Caco-2 (cell line): ENCODE measurements at regions of chr14 and their contacts with region 1.

Region 1: DNA sequence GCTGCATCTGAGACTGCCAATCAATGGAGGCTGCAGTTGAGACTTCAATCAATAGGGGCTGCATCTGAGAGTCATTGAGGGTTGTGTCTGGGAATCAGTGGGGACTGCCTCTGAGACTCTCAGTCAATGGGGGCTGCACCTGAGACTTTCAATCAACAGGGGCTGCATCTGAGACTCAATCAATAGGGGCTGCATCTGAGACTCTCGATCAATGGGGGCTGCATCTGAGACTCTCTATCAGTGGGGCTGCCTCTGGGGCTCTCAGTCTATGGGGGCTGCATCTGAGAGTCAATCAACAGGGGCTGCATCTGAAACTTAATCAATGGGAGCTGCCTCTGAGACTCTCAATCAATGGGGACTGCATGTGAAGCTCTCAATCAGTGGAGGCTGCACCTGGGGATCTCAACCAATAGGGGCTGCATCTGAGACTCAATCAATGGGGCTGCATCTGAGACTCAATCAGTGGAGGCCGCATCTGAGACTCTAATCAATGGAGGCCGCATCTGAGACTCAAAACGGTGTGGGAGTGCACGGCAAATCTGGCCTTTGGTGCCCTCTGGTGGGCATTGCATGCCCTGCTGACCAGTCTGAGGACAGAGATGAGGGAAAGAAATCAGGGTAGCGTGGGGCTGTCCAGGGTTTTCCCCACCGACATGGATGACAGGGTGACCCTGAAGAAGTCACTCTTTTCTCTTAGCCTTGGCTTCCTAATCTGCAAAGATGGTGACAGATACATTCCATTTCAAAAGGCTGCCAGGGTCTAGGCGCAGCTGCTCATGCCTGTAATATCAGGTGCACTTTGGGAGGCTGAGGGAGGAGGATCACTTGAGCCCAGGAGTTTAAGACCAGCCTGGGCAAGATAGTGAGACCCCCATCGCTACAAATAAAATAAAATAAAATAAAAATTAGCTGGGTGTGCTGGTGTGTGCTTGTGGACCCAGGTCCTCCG is 41.3 kb upstream of the EIF5 start:
- DNase-seq: peak; percentile 66 to 83
- H3K4me3 ChIP-seq: no peak overlapping the region
- H3K4me3 Mint-ChIP-seq: no peak overlapping the region
- H3K27ac Mint-ChIP-seq: no peak overlapping the region
- H3K4me1 ChIP-seq: no peaks in the 10 kb centered on the region
- H3K4me1 Mint-ChIP-seq: no peaks in the 10 kb centered on the region
- H3K27me3 ChIP-seq: no peaks in the 10 kb centered on the region
- H3K27me3 Mint-ChIP-seq: no peaks in the 10 kb centered on the region
- CTCF ChIP-seq: peak; percentile 78 to 92

Region 2: GRCh38 chr14:103078093-103078749 is 214.5 kb before region 1 on chr14:
- CTCF ChIA-PET with region 1: no interaction called
- POLR2A ChIA-PET with region 1: no interaction called
- intact Hi-C with region 1: loop called (anchors 1 kb)
- DNase-seq: peak; percentile 80 to 81
- H3K4me3 ChIP-seq: no peak overlapping the region
- H3K4me3 Mint-ChIP-seq: no peak overlapping the region
- H3K27ac Mint-ChIP-seq: no peak overlapping the region
- H3K4me1 ChIP-seq: no peaks in the 10 kb centered on the region
- H3K4me1 Mint-ChIP-seq: no peaks in the 10 kb centered on the region
- H3K27me3 ChIP-seq: no peaks in the 10 kb centered on the region
- H3K27me3 Mint-ChIP-seq: no peaks in the 10 kb centered on the region
- CTCF ChIP-seq: peak; percentile 80 to 84

Region 3: DNA sequence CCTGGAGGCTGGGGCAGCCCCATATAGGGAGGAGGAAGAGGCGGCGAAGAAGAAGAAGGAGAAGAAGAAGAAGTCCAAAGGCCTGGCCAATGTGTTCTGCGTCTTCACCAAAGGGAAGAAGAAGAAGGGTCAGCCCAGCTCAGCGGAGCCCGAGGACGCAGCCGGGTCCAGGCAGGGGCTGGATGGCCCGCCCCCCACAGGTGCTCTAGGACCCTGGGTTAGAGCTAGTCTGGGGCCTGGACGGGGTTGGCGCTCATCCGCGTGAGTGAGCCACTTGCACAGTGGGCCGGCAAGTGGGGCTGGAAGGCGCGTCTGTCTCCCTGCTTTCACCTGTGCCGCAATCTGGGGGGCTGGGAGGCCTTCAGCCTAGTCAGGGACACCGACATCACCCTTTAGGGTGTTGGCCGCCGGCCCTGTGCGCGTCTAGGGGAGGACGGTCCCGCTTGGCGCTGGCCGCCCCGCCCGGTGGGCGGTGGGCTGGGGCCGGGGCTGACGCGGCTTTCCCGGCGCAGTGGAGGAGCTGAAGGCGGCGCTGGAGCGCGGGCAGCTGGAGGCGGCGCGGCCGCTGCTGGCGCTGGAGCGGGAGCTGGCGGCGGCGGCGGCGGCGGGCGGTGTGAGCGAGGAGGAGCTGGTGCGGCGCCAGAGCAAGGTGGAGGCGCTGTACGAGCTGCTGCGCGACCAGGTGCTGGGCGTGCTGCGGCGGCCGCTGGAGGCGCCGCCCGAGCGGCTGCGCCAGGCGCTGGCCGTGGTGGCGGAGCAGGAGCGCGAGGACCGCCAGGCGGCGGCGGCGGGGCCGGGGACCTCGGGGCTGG is 166.0 kb before region 1 on chr14:
- CTCF ChIA-PET with region 1: interaction called, 11 read pairs
- POLR2A ChIA-PET with region 1: no interaction called
- intact Hi-C with region 1: no loop called
- DNase-seq: peak; percentile 78 to 90
- H3K4me3 ChIP-seq: peak overlapping the region; percentile 38
- H3K4me3 Mint-ChIP-seq: peak overlapping the region; percentile 63
- H3K27ac Mint-ChIP-seq: peak overlapping the region; percentile 20
- H3K4me1 ChIP-seq: peaks cover 7% of the 10 kb centered on the region
- H3K4me1 Mint-ChIP-seq: peaks cover 6% of the 10 kb centered on the region
- H3K27me3 ChIP-seq: no peaks in the 10 kb centered on the region
- H3K27me3 Mint-ChIP-seq: no peaks in the 10 kb centered on the region
- CTCF ChIP-seq: peak in 1 of 2 experiments; percentile 12

Region 4: GRCh38 chr14:103391048-103391447 is 98.3 kb after region 1 on chr14:
- CTCF ChIA-PET with region 1: no interaction called
- POLR2A ChIA-PET with region 1: no interaction called
- intact Hi-C with region 1: loop called (anchors 5 kb)
- DNase-seq: peak in 1 of 2 experiments; percentile 43
- H3K4me3 ChIP-seq: no peak overlapping the region
- H3K4me3 Mint-ChIP-seq: no peak overlapping the region
- H3K27ac Mint-ChIP-seq: no peak overlapping the region
- H3K4me1 ChIP-seq: peaks cover 12% of the 10 kb centered on the region; the same call in 1 of the 2 replicates
- H3K4me1 Mint-ChIP-seq: peaks cover 6% of the 10 kb centered on the region
- H3K27me3 ChIP-seq: no peaks in the 10 kb centered on the region
- H3K27me3 Mint-ChIP-seq: no peaks in the 10 kb centered on the region
- CTCF ChIP-seq: peak; percentile 70 to 75